ENCODE measurements at regions of chr18 and their contacts with region 1.

Region 1: DNA sequence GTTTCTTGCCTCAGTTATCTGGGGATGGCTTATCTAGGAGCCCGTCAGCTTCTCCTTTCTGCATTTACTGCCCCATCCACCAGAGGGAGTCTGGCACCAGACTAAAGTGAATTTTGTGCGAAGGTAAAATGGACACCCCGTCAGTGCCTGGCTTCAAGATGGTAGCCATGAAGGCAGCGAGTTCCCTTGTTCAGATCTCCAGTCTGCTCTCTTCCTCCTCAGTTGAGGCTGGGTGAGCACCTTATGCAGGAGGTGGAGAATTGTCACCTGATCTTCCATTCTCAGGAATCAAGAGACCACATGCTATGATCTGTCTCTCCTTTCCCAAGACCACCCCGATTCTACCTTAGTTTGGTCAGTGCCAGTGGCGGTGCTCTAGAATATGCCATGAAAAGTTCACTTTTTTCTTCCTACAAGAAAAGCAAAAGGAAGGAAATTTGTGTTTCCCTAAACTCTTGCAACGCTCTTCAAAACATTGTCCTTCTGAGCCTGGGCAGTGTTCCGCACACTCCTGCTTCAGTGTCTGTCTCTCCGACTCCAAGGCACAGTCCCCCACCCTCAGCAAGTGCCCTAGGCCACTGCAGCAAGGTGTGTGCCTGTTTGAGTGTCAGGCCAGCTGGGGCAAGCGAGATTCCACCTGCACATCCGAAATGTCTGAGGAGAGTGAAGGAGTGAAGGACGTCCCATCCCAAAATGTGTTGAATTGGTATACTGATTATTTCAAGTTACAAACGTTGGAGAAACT is 168.6 kb downstream of the SS18 start:
- DNase-seq: peak; percentile 83
- H3K4me3 Mint-ChIP-seq: no peak overlapping the region
- H3K27ac Mint-ChIP-seq: no peak overlapping the region
- H3K4me1 Mint-ChIP-seq: no peaks in the 10 kb centered on the region
- H3K27me3 Mint-ChIP-seq: peaks cover under 1% of the 10 kb centered on the region

Region 2: GRCh38 chr18:25842665-25843064 is 79.2 kb before region 1 on chr18:
- intact Hi-C with region 1: no loop called
- DNase-seq: no peak
- H3K4me3 Mint-ChIP-seq: no peak overlapping the region
- H3K27ac Mint-ChIP-seq: no peak overlapping the region
- H3K4me1 Mint-ChIP-seq: no peaks in the 10 kb centered on the region
- H3K27me3 Mint-ChIP-seq: no peaks in the 10 kb centered on the region

Region 3: GRCh38 chr18:26159353-26159752 is 237.5 kb after region 1 on chr18:
- intact Hi-C with region 1: loop called (anchors 2 kb)
- DNase-seq: no peak
- H3K4me3 Mint-ChIP-seq: no peak overlapping the region
- H3K27ac Mint-ChIP-seq: no peak overlapping the region
- H3K4me1 Mint-ChIP-seq: no peaks in the 10 kb centered on the region
- H3K27me3 Mint-ChIP-seq: peaks cover 4% of the 10 kb centered on the region

Region 4: DNA sequence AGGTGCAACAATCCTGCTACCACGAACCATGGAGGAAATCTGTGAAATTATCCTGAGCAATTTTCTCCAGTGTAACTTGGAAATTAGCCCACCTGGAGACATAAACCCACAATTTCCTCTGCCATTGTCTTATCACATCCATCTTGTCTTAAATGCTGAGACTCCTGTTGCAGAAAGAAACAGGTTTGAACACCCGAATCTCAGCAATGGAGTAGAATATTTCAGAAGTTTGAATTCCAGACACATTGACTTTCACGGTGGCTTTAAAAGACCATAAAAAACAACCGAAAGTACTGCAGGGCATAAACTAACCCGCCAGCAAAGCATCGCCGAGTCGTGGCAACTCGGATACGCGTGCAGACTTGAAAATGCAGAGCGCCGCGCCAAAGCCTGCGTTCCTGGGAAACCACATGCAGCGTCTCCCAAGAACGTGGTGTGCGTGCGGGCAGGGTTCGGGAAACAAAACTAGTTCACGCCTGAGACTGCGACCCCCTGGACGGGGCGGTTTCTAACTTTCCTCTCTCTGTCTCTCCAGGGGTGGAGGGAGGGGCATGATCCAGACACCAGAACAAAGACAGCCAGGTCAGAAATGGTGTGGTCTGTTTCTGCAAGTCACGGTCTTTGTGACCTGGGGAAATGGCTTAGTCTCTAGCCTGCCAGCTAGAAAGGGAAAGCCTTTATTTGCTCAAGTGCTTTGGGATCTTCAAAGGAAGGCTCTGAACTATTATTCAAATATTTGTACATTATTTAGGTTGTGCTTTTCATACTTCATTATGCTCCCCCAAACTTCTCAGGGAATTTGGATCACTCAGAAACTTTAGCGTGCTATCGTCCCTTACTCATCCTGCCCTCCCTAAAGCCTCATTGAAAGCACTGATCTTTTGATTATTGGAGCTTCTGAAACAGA is 653.4 kb after region 1 on chr18:
- intact Hi-C with region 1: no loop called
- DNase-seq: peak; percentile 58
- H3K4me3 Mint-ChIP-seq: peak overlapping the region; percentile 58
- H3K27ac Mint-ChIP-seq: no peak overlapping the region
- H3K4me1 Mint-ChIP-seq: peaks cover 2% of the 10 kb centered on the region
- H3K27me3 Mint-ChIP-seq: peaks cover 46% of the 10 kb centered on the region

Measured in activated CD4-positive, alpha-beta T cell treated with anti-CD3 and anti-CD28 coated beads, Interleukin-2, amount 10 ng/mL, durations not matched to agents 24 days and 14 days (primary cell).